Uterus (tissue), 4 donors: ENCODE measurements at regions of chr11 and their contacts with region 1.

Region 1: DNA sequence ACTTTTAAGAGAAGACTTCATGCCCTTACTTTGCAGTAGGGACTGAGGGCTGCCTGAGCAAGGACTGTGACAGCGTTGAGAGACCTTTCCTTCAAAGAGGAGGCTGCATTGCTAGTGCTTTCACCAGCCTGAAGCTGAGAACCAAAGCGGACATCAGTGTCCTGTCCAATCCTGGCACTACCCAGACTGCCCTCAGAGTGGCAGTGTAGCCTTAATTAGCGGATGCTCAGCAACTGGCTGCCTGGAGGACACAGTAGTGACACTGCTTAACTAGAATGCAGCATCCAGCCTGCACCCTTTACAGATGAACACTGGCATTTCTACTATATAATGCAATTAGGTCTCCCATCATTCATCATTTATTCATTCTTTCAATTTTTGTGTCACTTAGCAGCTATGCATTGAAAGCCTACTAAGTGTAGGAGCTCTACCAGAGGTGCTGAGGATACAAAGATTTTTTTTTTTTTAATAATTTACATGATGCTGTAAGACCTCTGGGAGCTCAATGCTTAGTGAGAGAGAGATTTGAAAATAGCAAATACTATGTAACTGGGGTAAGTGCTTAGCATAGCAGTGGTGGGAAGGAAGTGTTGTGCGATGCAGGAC is 36.9 kb upstream of the SLC36A4 start:
- DNase-seq: peak; percentile 64 to 67
- H3K4me3 ChIP-seq: no peak overlapping the region
- H3K27ac ChIP-seq: no peak overlapping the region
- H3K4me1 ChIP-seq: no peaks in the 10 kb centered on the region
- H3K27me3 ChIP-seq: no peaks in the 10 kb centered on the region
- CTCF ChIP-seq: peak; percentile 78 to 90 (median 81)
- POLR2A ChIP-seq: no peak

Region 2: DNA sequence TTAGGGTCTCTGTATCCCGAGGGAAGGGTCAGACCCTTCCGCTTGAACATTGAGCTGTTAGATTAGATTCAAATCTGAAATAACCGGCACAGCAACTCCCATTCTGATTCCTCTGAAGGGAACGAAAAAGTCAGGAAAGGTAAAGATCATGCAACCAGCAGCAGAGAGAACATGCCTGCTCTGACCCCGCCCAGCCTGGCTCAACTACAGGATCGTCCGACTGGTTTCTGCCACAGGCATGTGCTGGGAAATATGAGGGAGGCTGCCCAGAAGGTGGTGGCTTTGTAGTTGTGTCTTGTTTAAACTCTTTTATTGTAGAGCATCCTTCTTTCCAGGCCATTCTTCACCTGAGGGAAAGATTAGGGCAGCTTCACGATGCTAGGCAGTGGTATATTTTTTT is 270.2 kb before region 1 on chr11:
- intact Hi-C with region 1: no loop called
- DNase-seq: no peak
- H3K4me3 ChIP-seq: no peak overlapping the region
- H3K27ac ChIP-seq: no peak overlapping the region
- H3K4me1 ChIP-seq: no peaks in the 10 kb centered on the region
- H3K27me3 ChIP-seq: no peaks in the 10 kb centered on the region
- CTCF ChIP-seq: no peak
- POLR2A ChIP-seq: no peak

Region 3: GRCh38 chr11:93652161-93652597 is 417.5 kb after region 1 on chr11:
- intact Hi-C with region 1: loop called (anchors 10 kb)
- DNase-seq: no peak
- H3K4me3 ChIP-seq: no peak overlapping the region
- H3K27ac ChIP-seq: no peak overlapping the region
- H3K4me1 ChIP-seq: no peaks in the 10 kb centered on the region
- H3K27me3 ChIP-seq: no peaks in the 10 kb centered on the region
- CTCF ChIP-seq: peak; percentile 52 to 85 (median 66)
- POLR2A ChIP-seq: no peak